CD8-positive, alpha-beta T cell (primary cell): ENCODE measurements at regions of chr17 and their contacts with region 1.

Region 1: DNA sequence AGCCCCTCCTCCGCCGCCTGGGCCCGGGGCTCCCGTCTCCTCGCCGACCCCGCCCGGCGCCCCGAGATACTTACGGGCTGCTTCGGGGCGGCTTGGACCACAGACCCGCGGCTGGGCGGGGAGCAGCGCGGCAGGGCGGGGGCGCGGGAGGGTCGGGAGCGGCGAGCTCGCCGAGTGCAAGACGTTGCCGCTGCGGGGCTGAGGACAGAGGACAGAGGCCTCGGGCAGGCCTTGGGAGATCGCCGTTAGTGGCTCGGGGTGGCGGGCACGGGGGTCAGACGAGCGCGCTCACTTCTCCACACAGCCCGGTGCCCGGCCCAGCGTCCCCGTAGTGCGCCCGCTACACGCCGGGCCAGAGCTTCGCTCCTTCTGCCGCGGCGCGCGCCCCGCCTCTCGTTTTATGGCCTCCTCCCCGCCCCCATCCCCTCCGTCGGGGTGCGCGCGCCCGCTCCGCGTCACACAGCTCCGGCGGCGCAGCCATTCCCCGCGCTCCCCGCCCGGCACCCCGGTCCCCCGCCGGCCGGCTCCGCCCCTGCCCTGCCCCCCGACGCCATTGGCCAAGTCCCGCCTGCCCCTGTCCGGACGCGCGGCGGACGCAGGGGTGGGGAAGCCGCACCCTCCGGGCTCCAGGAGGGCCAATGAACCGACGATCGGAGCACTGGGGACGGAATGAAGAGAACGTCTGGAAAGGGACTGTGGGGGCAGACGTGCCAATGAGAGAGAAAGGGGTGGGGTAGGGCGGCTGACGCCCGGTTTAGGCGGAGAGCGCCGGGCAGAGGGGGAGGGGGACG is at the start of gene TOB1:
- DNase-seq: peak; percentile 92 to 99 (median 97)
- ATAC-seq: peak; percentile 68
- H3K4me3 ChIP-seq: peak within 1 kb of the TSS; percentile 64 to 86
- H3K4me3 Mint-ChIP-seq: peak within 1 kb of the TSS; percentile 100
- H3K27ac ChIP-seq: peak within 1 kb of the TSS; percentile 89 to 97
- H3K27ac Mint-ChIP-seq: peak within 1 kb of the TSS; percentile 99
- H3K4me1 ChIP-seq: peaks cover 40% of the 10 kb centered on the region
- H3K4me1 Mint-ChIP-seq: peaks cover 52% of the 10 kb centered on the region
- H3K27me3 ChIP-seq: no peaks in the 10 kb centered on the region
- H3K27me3 Mint-ChIP-seq: no peaks in the 10 kb centered on the region
- CTCF ChIP-seq: no peak
- total RNA-seq, gene TOB1: 252 to 277 TPM

Region 2: GRCh38 chr17:50719144-50719923 is 146.8 kb before region 1 on chr17 and contains the start of gene LUC7L3:
- CTCF ChIA-PET with region 1: no interaction called
- POLR2A ChIA-PET with region 1: interaction called, 3 read pairs
- intact Hi-C with region 1: loop called in 1 of 2 experiments (anchors 1 kb)
- DNase-seq: peak; percentile 86 to 96 (median 92)
- ATAC-seq: peak; percentile 94
- H3K4me3 ChIP-seq: peak within 1 kb of the TSS; percentile 87 to 92
- H3K4me3 Mint-ChIP-seq: peak within 1 kb of the TSS; percentile 98
- H3K27ac ChIP-seq: peak within 1 kb of the TSS; percentile 93 to 97
- H3K27ac Mint-ChIP-seq: peak within 1 kb of the TSS; percentile 99
- H3K4me1 ChIP-seq: peaks cover 31% of the 10 kb centered on the region
- H3K4me1 Mint-ChIP-seq: peaks cover 34% of the 10 kb centered on the region
- H3K27me3 ChIP-seq: no peaks in the 10 kb centered on the region
- H3K27me3 Mint-ChIP-seq: no peaks in the 10 kb centered on the region
- CTCF ChIP-seq: no peak
- total RNA-seq, gene LUC7L3: 90.0 to 96.1 TPM

Region 3: GRCh38 chr17:50828508-50829170 is 37.5 kb before region 1 on chr17:
- CTCF ChIA-PET with region 1: no interaction called
- POLR2A ChIA-PET with region 1: no interaction called
- intact Hi-C with region 1: no loop called
- DNase-seq: no peak
- ATAC-seq: no peak
- H3K4me3 ChIP-seq: no peak overlapping the region
- H3K4me3 Mint-ChIP-seq: no peak overlapping the region
- H3K27ac ChIP-seq: no peak overlapping the region
- H3K27ac Mint-ChIP-seq: no peak overlapping the region
- H3K4me1 ChIP-seq: no peaks in the 10 kb centered on the region
- H3K4me1 Mint-ChIP-seq: no peaks in the 10 kb centered on the region
- H3K27me3 ChIP-seq: no peaks in the 10 kb centered on the region
- H3K27me3 Mint-ChIP-seq: peaks cover 7% of the 10 kb centered on the region
- CTCF ChIP-seq: no peak

Region 4: GRCh38 chr17:50904521-50905459 is 38.6 kb after region 1 on chr17:
- CTCF ChIA-PET with region 1: interaction called, 11 read pairs
- POLR2A ChIA-PET with region 1: interaction called, 196 read pairs
- intact Hi-C with region 1: no loop called
- DNase-seq: peak in 1 of 9 experiments; percentile 29
- ATAC-seq: no peak
- H3K4me3 ChIP-seq: no peak overlapping the region
- H3K4me3 Mint-ChIP-seq: no peak overlapping the region
- H3K27ac ChIP-seq: peak overlapping the region; percentile 46 to 73
- H3K27ac Mint-ChIP-seq: peak overlapping the region; percentile 89
- H3K4me1 ChIP-seq: peaks cover 67% of the 10 kb centered on the region
- H3K4me1 Mint-ChIP-seq: peaks cover 61% of the 10 kb centered on the region
- H3K27me3 ChIP-seq: no peaks in the 10 kb centered on the region
- H3K27me3 Mint-ChIP-seq: no peaks in the 10 kb centered on the region
- CTCF ChIP-seq: no peak

Region 5: GRCh38 chr17:50931144-50931908 is 65.1 kb after region 1 on chr17:
- CTCF ChIA-PET with region 1: interaction called, 4 read pairs
- POLR2A ChIA-PET with region 1: interaction called, 72 read pairs
- intact Hi-C with region 1: loop called (anchors 1 to 5 kb)
- DNase-seq: peak in 7 of 9 experiments; percentile 39 to 79 (median 56)
- ATAC-seq: peak; percentile 75
- H3K4me3 ChIP-seq: peak overlapping the region; percentile 46 to 55
- H3K4me3 Mint-ChIP-seq: peak overlapping the region; percentile 90
- H3K27ac ChIP-seq: peak overlapping the region; percentile 71
- H3K27ac Mint-ChIP-seq: peak overlapping the region; percentile 99
- H3K4me1 ChIP-seq: peaks cover 30% of the 10 kb centered on the region
- H3K4me1 Mint-ChIP-seq: peaks cover 41% of the 10 kb centered on the region
- H3K27me3 ChIP-seq: no peaks in the 10 kb centered on the region
- H3K27me3 Mint-ChIP-seq: no peaks in the 10 kb centered on the region
- CTCF ChIP-seq: no peak

Region 6: DNA sequence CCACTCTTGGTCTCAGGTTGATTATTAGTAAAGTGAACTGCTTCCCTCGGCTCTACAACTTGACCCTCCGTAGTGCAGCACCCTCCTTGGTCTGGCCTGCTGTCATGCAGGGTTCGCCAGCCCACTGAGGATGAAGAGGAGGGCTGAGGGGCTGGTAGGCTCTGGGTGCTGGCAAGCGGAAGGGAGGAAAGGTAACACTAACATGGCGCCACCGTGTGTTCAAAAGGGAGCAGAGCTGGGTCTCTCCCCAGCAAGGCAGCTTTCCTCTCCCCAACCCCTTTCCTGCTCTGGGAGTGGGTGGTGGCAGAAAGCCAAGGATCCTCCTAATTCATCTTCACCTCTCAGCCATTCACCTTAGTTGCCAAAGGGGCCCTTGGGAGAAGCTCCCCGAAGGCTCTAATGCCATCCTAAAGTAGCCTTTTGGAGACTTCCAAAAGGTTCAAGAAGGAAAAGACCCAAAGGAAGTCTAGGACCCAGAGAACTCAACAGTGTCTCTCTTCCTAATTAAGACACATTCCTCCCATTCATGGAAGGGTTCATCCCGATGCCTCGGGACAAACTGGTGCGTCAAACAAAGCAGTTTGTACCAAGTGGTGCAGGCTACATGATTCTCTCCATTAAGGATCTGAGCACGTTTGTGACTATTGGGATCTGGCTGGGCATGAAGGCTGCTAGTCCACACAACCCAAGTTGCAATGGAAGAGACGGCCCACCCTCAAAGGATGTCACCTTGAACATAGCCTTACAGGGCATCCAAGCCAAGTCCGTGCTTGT is 90.8 kb after region 1 on chr17:
- CTCF ChIA-PET with region 1: interaction called, 761 read pairs
- POLR2A ChIA-PET with region 1: interaction called, 76 read pairs
- intact Hi-C with region 1: loop called in 1 of 2 experiments (anchors 1 kb)
- DNase-seq: peak; percentile 39 to 81 (median 71)
- ATAC-seq: peak; percentile 93
- H3K4me3 ChIP-seq: no peak overlapping the region
- H3K4me3 Mint-ChIP-seq: no peak overlapping the region
- H3K27ac ChIP-seq: no peak overlapping the region
- H3K27ac Mint-ChIP-seq: no peak overlapping the region
- H3K4me1 ChIP-seq: peaks cover 4% of the 10 kb centered on the region
- H3K4me1 Mint-ChIP-seq: peaks cover 3% of the 10 kb centered on the region
- H3K27me3 ChIP-seq: no peaks in the 10 kb centered on the region
- H3K27me3 Mint-ChIP-seq: no peaks in the 10 kb centered on the region
- CTCF ChIP-seq: peak; percentile 79

Region 7: DNA sequence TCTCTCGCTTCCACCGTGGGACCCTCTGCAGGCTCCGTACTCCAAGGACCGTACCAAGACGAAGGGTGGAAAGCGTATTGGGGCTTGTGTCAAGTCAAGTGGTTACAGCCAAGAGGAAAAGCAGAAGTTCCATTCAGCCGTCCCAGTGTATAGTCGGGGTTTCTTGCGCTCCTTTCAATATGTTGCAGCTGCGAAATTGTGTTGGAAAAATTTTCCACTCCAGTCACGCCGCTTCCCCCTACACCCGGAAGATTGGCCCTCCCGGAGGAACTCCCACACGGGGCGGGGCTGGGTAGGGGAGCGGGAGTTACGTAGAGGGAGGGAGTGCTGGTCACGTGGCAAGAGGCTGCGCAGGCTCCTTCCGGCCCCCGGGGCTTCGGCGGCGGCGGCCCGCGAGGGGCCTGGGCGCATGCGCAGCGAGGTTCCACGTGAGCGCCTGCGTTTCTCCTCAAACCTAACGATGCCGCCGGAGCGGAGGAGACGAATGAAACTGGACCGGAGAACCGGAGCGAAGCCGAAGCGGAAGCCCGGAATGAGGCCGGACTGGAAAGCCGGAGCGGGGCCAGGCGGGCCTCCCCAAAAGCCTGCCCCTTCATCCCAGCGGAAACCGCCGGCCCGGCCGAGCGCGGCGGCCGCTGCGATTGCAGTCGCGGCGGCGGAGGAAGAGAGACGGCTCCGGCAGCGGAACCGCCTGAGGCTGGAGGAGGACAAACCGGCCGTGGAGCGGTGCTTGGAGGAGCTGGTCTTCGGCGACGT is 394.1 kb after region 1 on chr17 and contains the start of gene UTP18:
- CTCF ChIA-PET with region 1: no interaction called
- POLR2A ChIA-PET with region 1: interaction called, 7 read pairs
- intact Hi-C with region 1: loop called in 1 of 2 experiments (anchors 5 kb)
- DNase-seq: peak; percentile 91 to 99 (median 97)
- ATAC-seq: peak; percentile 87
- H3K4me3 ChIP-seq: peak within 1 kb of the TSS; percentile 76 to 87
- H3K4me3 Mint-ChIP-seq: peak within 1 kb of the TSS; percentile 97
- H3K27ac ChIP-seq: peak within 1 kb of the TSS; percentile 97 to 98
- H3K27ac Mint-ChIP-seq: peak within 1 kb of the TSS; percentile 98
- H3K4me1 ChIP-seq: peaks cover 46% of the 10 kb centered on the region
- H3K4me1 Mint-ChIP-seq: peaks cover 67% of the 10 kb centered on the region
- H3K27me3 ChIP-seq: no peaks in the 10 kb centered on the region
- H3K27me3 Mint-ChIP-seq: no peaks in the 10 kb centered on the region
- CTCF ChIP-seq: no peak
- total RNA-seq, gene UTP18: 53.5 to 59.8 TPM